Activated CD4-positive, alpha-beta memory T cell treated with anti-CD3 and anti-CD28 coated beads for 36 hours (primary cell): ENCODE measurements at regions of chr12 and their contacts with region 1.

Region 1: GRCh38 chr12:49855005-49855404 is 12.1 kb upstream of the BCDIN3D start:
- DNase-seq: no peak
- H3K4me3 Mint-ChIP-seq: no peak overlapping the region
- H3K27ac Mint-ChIP-seq: no peak overlapping the region
- H3K4me1 Mint-ChIP-seq: peaks cover 7% of the 10 kb centered on the region
- H3K27me3 Mint-ChIP-seq: no peaks in the 10 kb centered on the region

Region 2: GRCh38 chr12:49866859-49867579 is 12.0 kb after region 1 on chr12:
- CTCF ChIA-PET with region 1: interaction called, 10 read pairs
- POLR2A ChIA-PET with region 1: no interaction called
- intact Hi-C with region 1: no loop called
- DNase-seq: peak; percentile 83
- H3K4me3 Mint-ChIP-seq: no peak overlapping the region
- H3K27ac Mint-ChIP-seq: no peak overlapping the region
- H3K4me1 Mint-ChIP-seq: no peaks in the 10 kb centered on the region
- H3K27me3 Mint-ChIP-seq: no peaks in the 10 kb centered on the region